CD4-positive, alpha-beta memory T cell (primary cell): ENCODE measurements at regions of chr6 and their contacts with region 1.

Region 1: DNA sequence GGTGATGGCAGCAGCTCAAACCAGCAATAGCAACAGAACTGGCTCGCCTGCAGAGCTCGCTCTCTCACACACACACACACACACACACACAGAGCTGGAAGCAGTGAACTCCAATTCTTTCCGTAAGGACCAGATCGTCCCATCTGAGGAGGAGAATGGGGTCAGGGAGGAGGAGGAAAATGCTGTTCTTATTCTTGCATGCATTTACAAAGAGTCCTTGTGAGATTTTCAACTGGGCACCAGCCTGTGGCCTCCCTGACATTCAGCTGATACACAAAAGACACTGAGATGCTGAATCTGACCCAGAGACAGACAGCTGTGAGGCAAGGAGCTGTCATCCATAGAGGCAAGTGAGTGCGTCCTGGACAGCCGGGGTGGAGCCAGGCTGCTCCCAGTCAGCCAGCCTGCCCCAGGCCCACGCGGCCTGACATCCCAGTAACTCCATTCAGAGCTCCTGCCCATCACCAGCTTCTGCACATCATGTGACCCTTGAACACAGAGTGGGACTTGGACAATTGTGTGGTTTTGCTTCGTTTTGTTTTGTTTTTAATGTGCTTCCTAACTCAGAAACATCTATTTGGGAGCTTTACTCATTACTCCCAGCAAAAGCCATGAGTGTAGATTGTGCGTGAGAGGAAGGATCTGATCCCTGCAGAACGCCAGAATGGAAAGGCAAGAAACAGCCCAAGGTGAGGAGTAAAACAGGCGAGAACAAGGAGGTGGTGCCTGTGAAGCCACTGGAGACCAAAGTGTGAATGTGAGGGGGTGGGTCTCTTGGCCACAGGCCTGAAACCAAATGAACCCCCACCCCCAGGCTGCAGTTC is 2.1 kb downstream of the SERPINB9 start:
- DNase-seq: peak in 1 of 5 donors; percentile 22
- H3K4me3 ChIP-seq: peak overlapping the region; percentile 42 to 92
- H3K4me3 Mint-ChIP-seq: peak overlapping the region; percentile 99 to 100 (median 99)
- H3K27ac ChIP-seq: peak overlapping the region; percentile 82
- H3K27ac Mint-ChIP-seq: peak overlapping the region; percentile 91 to 99 (median 98)
- H3K4me1 ChIP-seq: peaks cover 57% of the 10 kb centered on the region
- H3K4me1 Mint-ChIP-seq: peaks cover 44 to 66% (median 54%) of the 10 kb centered on the region in 4 donors
- H3K27me3 ChIP-seq: no peaks in the 10 kb centered on the region
- H3K27me3 Mint-ChIP-seq: no peaks in the 10 kb centered on the region

Region 2: DNA sequence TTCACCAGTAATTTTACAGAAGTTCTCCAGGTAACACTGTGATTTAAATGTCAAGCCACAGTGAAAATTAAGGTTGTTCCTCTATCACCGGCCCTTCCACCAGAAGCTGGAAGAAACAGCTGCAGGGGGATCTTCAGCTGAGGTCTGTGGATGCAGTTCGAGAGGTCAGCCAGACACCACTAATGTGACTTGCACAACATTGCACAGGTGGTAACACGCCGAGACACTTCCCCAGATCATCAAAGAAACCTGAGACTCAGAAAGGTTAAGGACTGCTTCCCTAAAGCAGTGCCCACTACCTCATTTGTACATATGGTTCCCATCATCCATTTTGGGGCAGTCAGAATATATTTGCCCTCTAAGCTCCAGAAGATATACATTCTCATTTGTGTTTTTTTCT is 10.1 kb after region 1 on chr6:
- CTCF ChIA-PET with region 1: interaction called, 17 read pairs
- POLR2A ChIA-PET with region 1: interaction called, 9 read pairs
- intact Hi-C with region 1: no loop called
- DNase-seq: no peak
- H3K4me3 ChIP-seq: no peak overlapping the region
- H3K4me3 Mint-ChIP-seq: no peak overlapping the region
- H3K27ac ChIP-seq: no peak overlapping the region
- H3K27ac Mint-ChIP-seq: no peak overlapping the region
- H3K4me1 ChIP-seq: peaks cover 6% of the 10 kb centered on the region
- H3K4me1 Mint-ChIP-seq: peaks cover 15 to 31% (median 22%) of the 10 kb centered on the region in 4 donors
- H3K27me3 ChIP-seq: no peaks in the 10 kb centered on the region
- H3K27me3 Mint-ChIP-seq: no peaks in the 10 kb centered on the region